Activated CD8-positive, alpha-beta T cell treated with anti-CD3 and anti-CD28 coated beads, Interleukin-2, amount 10 ng/mL, durations not matched to agents 7 days and 5 days (primary cell): ENCODE measurements at regions of chr11 and their contacts with region 1.

Region 1: DNA sequence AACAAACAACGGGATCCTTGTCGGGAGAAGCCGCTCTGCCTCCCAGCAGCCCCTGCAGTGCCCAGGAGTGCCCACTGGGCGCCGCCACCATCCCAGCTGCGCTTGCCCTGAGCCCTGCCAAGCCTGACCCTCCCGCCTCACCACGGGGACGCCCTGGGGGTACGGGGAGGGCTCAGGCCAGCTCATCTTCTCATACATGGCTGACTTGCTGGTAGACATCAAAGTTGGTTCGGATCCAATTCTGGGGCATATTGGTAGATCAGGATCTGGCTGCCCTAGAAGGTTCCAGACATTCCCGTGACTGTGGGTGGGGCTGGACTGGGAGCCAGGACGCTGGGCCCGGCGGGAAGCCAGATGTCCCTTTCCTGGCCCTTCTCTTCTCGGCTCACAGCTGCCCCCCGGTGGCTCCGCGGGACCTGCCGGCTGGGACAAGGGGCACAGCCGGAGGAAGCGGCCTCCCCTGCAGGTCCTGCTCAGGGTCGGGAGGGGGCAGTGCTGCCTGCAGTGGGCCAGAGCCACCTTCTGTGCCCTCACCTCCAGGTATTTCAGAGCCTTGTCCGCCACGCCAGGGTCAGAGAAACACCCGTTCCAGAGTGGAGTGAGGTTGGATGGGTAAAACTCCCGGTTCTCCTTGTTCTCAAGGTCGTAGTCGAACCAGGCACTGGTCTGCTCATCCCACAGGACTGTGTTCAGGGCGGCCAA is 10.6 kb upstream of the TREH start:
- DNase-seq: peak; percentile 91
- ATAC-seq: peak; percentile 95
- H3K4me3 Mint-ChIP-seq: peak overlapping the region; percentile 59
- H3K27ac Mint-ChIP-seq: peak overlapping the region; percentile 80
- H3K4me1 Mint-ChIP-seq: peaks cover 57% of the 10 kb centered on the region
- H3K27me3 Mint-ChIP-seq: peaks cover 12% of the 10 kb centered on the region

Region 2: DNA sequence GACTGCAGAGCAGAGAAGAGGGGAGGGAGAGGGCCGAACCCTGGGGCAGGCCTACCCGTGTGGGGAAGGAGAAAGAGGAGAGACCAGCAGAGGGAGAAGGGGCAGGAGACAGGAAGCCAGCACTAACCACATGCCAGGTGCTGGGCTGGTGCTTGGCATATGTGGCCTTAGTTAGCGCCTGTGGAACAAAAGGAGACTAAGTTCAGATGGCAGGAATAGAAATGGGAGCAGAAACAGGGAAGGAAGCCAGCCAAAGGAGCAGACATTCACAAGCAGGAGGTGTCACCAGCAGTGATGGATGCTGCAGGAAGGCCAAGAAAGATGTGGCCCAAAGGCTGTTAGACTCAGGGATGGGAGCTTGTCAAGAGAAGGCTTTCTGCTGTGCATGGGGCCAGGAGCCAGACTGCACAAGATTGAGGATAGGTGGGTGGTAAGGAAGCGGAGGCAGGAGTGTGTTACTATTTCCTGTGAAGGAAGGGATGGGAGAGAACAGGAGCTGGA is 37.3 kb before region 1 on chr11:
- CTCF ChIA-PET with region 1: no interaction called
- POLR2A ChIA-PET with region 1: no interaction called
- DNase-seq: no peak
- ATAC-seq: no peak
- H3K4me3 Mint-ChIP-seq: no peak overlapping the region
- H3K27ac Mint-ChIP-seq: no peak overlapping the region
- H3K4me1 Mint-ChIP-seq: peaks cover 9% of the 10 kb centered on the region
- H3K27me3 Mint-ChIP-seq: no peaks in the 10 kb centered on the region

Region 3: DNA sequence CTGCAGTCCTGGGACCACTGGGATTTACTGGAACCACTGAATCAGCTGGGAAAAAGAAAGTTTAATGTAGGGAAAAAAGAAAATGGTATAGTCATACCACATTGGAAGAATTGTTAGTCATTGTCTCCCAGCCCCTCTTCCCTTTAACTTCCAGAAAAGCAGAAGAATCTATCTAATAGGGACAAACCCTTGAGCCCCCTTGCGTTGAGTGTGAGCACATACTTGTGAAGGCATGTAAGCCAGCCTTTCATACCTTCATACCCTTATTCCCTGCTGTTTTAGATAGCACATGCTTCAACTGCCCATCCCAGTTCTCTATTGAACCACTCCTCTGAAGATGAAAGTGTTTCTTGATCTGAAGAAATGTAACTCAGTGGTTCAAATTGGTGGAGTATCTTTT is 17.2 kb before region 1 on chr11:
- CTCF ChIA-PET with region 1: interaction called, 22 read pairs
- POLR2A ChIA-PET with region 1: no interaction called
- DNase-seq: no peak
- ATAC-seq: no peak
- H3K4me3 Mint-ChIP-seq: no peak overlapping the region
- H3K27ac Mint-ChIP-seq: no peak overlapping the region
- H3K4me1 Mint-ChIP-seq: no peaks in the 10 kb centered on the region
- H3K27me3 Mint-ChIP-seq: peaks cover 22% of the 10 kb centered on the region

Region 4: GRCh38 chr11:118705111-118705741 is 15.2 kb after region 1 on chr11:
- CTCF ChIA-PET with region 1: interaction called, 40 read pairs
- POLR2A ChIA-PET with region 1: interaction called, 3 read pairs
- DNase-seq: peak; percentile 71
- ATAC-seq: peak; percentile 83
- H3K4me3 Mint-ChIP-seq: peak overlapping the region; percentile 67
- H3K27ac Mint-ChIP-seq: peak overlapping the region; percentile 79
- H3K4me1 Mint-ChIP-seq: peaks cover 23% of the 10 kb centered on the region
- H3K27me3 Mint-ChIP-seq: peaks cover 22% of the 10 kb centered on the region

Region 5: GRCh38 chr11:118757876-118758399 is 67.9 kb after region 1 on chr11:
- CTCF ChIA-PET with region 1: interaction called, 10 read pairs
- POLR2A ChIA-PET with region 1: no interaction called
- DNase-seq: no peak
- ATAC-seq: no peak
- H3K4me3 Mint-ChIP-seq: no peak overlapping the region
- H3K27ac Mint-ChIP-seq: no peak overlapping the region
- H3K4me1 Mint-ChIP-seq: no peaks in the 10 kb centered on the region
- H3K27me3 Mint-ChIP-seq: no peaks in the 10 kb centered on the region

Region 6: GRCh38 chr11:118771547-118772288 is 81.7 kb after region 1 on chr11:
- CTCF ChIA-PET with region 1: interaction called, 12 read pairs
- POLR2A ChIA-PET with region 1: no interaction called
- DNase-seq: no peak
- ATAC-seq: no peak
- H3K4me3 Mint-ChIP-seq: no peak overlapping the region
- H3K27ac Mint-ChIP-seq: peak overlapping the region; percentile 71
- H3K4me1 Mint-ChIP-seq: peaks cover 46% of the 10 kb centered on the region
- H3K27me3 Mint-ChIP-seq: no peaks in the 10 kb centered on the region

Region 7: GRCh38 chr11:118870396-118871345 is 180.7 kb after region 1 on chr11:
- CTCF ChIA-PET with region 1: interaction called, 11 read pairs
- POLR2A ChIA-PET with region 1: no interaction called
- DNase-seq: no peak
- ATAC-seq: peak; percentile 49
- H3K4me3 Mint-ChIP-seq: peak overlapping the region; percentile 75
- H3K27ac Mint-ChIP-seq: peak overlapping the region; percentile 98
- H3K4me1 Mint-ChIP-seq: peaks cover 54% of the 10 kb centered on the region
- H3K27me3 Mint-ChIP-seq: no peaks in the 10 kb centered on the region

Region 8: DNA sequence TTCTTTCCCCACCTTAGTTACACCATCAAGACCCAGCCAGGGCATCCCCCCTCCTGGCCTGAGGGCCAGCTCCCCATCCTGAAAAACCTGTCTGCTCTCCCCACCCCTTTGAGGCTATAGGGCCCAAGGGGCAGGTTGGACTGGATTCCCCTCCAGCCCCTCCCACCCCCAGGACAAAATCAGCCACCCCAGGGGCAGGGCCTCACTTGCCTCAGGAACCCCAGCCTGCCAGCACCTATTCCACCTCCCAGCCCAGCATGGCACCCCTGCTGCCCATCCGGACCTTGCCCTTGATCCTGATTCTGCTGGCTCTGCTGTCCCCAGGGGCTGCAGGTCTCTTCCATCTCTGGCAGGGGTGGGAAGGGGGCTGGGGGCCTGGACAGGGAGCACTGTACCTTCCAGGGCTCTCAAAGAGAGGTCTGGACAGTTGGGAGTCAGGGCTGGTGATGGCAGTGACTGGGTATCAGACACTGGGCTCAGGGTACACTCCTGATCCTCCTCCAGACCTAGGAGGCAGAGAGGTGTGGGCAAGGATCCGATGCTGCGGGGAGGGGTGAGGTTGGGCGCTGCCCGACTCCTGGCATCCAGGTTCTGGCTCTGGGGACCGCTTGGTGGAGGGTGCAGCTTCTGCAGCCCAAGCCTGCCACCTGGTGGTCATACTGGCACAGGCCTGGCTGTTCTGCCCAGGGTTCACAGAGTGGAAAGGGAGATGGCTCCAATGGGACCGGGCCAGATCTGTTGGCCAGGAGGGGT is 266.3 kb after region 1 on chr11 and contains the start of gene UPK2:
- CTCF ChIA-PET with region 1: interaction called, 15 read pairs
- POLR2A ChIA-PET with region 1: no interaction called
- DNase-seq: peak; percentile 91
- ATAC-seq: peak; percentile 100
- H3K4me3 Mint-ChIP-seq: no peak within 1 kb of the TSS
- H3K27ac Mint-ChIP-seq: no peak within 1 kb of the TSS
- H3K4me1 Mint-ChIP-seq: peaks cover 5% of the 10 kb centered on the region
- H3K27me3 Mint-ChIP-seq: peaks cover 7% of the 10 kb centered on the region
- total RNA-seq, gene UPK2: not detected